ENCODE measurements at regions of chr1 and their contacts with region 1.

Region 1: DNA sequence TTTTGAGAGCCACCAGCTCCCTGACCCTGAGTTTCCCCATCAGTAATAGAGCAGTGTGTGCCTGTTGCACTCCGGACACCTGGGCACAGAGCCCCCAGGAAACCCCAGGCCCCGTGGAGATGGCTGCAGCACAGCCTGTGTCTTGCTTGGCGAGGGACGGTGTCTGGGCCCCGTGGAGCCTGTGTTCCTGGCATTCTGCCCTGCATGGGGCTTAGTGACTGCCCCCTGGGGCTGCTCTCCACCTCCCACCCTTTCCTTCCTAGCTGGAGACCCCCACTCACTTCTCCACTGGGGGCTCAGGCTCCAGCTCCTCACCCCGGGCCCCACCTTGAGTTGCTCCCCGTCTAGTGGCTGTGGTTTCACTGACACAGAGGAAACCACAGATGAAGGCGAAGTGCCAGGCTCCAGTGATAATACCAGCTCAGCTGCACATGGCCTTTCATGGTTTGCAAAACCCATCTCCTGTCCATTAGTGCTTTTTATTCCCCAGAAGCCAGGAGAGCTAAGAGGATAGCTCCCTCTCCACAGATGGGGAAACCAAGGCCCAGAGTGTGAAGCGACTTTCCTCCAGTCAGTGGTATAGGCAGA is 39.5 kb downstream of the DMRTB1 start:
- DNase-seq: no peak
- ATAC-seq: no peak
- H3K4me3 ChIP-seq: no peak overlapping the region
- H3K27ac ChIP-seq: no peak overlapping the region
- H3K4me1 ChIP-seq: no peaks in the 10 kb centered on the region
- H3K27me3 ChIP-seq: peaks cover 0 to 65% (median 33%) of the 10 kb centered on the region in 7 donors
- CTCF ChIP-seq: no peak

Region 2: GRCh38 chr1:53431805-53432565 is 66.7 kb before region 1 on chr1:
- intact Hi-C with region 1: no loop called
- DNase-seq: no peak
- ATAC-seq: no peak
- H3K4me3 ChIP-seq: no peak overlapping the region
- H3K27ac ChIP-seq: no peak overlapping the region
- H3K4me1 ChIP-seq: no peaks in the 10 kb centered on the region
- H3K27me3 ChIP-seq: peaks cover 0 to 43% (median 34%) of the 10 kb centered on the region in 7 donors
- CTCF ChIP-seq: no peak

Region 3: DNA sequence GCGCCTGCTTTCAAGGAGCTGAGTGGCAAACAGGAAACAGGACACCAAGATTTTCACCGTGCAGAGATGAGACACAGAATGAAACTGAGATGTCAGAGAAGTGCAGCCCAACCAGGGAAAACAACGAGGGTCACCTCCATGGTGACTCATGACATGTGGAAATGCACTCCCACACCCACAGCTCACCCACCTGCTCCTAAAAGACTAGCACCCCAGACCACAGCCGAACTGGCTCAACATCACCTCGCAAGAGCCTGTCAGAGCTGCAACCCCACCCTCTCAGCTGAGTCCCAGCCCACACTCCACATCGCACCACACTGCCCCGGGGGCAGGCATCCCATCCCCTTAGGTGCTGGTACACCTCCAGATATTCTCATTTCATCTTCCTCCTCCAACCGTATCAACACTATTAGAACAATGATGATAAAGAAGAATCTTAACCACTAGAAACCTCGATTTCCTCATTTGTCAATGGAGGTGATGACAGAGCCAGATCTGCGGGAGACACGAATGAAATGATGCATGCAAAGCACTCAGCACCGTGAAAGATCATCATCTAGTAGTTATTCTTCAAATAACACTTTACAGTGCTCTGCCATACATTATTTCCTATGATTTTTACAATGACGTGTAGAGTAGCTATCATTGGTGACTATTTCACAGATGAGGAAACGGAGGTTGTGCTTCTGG is 63.8 kb after region 1 on chr1:
- intact Hi-C with region 1: no loop called
- DNase-seq: no peak
- ATAC-seq: no peak
- H3K4me3 ChIP-seq: no peak overlapping the region
- H3K27ac ChIP-seq: no peak overlapping the region
- H3K4me1 ChIP-seq: no peaks in the 10 kb centered on the region
- H3K27me3 ChIP-seq: peaks cover 0 to 34% (median 15%) of the 10 kb centered on the region in 7 donors
- CTCF ChIP-seq: no peak

Region 4: DNA sequence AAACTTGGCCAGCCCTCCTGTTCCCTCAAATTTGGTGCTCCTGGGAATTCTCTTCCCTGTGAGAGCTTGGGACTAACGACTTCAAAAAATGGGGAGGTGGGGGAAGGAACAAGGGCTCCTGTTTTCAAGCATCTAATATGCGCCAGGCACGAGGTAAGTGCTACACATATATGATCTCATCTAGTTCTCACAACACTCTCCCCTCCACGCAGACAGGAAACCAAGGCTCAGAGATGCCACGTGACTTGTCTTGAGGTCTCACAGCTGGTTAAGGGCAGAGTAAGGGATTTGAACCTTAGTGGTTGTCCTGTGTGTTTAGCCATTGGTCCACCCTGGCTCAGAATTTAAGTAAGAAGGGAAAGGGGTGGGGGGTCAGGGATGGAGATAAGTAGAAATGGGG is 86.5 kb after region 1 on chr1:
- intact Hi-C with region 1: loop called in 1 of 10 experiments (anchors 10 kb)
- DNase-seq: no peak
- ATAC-seq: peak in 4 of 8 donors; percentile 32 to 51 (median 40)
- H3K4me3 ChIP-seq: no peak overlapping the region
- H3K27ac ChIP-seq: no peak overlapping the region
- H3K4me1 ChIP-seq: peaks cover 0 to 7% (median 0%) of the 10 kb centered on the region in 9 donors
- H3K27me3 ChIP-seq: peaks cover 0 to 10% (median 0%) of the 10 kb centered on the region in 7 donors
- CTCF ChIP-seq: no peak

Region 5: DNA sequence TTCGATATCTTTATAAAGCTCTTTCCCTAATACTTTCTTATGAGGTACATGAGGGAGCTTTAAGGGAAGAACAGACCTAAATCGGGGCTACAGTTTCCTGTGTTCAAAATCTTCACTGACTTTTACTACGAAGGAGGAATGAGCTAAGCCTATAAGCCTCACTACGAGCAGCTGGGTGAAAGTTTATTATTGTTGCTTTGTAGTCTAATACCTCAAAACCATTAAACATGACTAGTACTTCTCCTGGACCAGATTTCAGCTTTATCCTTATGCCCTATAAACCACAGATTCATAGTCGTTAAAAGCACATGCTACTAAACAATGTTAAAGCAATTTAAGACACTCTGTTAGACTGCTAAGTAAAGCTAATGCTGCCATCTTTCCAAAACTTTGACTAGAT is 309.3 kb after region 1 on chr1:
- intact Hi-C with region 1: no loop called
- DNase-seq: no peak
- ATAC-seq: no peak
- H3K4me3 ChIP-seq: no peak overlapping the region
- H3K27ac ChIP-seq: no peak overlapping the region
- H3K4me1 ChIP-seq: peaks cover 0 to 6% (median 0%) of the 10 kb centered on the region in 9 donors
- H3K27me3 ChIP-seq: no peaks in the 10 kb centered on the region
- CTCF ChIP-seq: no peak

Region 6: DNA sequence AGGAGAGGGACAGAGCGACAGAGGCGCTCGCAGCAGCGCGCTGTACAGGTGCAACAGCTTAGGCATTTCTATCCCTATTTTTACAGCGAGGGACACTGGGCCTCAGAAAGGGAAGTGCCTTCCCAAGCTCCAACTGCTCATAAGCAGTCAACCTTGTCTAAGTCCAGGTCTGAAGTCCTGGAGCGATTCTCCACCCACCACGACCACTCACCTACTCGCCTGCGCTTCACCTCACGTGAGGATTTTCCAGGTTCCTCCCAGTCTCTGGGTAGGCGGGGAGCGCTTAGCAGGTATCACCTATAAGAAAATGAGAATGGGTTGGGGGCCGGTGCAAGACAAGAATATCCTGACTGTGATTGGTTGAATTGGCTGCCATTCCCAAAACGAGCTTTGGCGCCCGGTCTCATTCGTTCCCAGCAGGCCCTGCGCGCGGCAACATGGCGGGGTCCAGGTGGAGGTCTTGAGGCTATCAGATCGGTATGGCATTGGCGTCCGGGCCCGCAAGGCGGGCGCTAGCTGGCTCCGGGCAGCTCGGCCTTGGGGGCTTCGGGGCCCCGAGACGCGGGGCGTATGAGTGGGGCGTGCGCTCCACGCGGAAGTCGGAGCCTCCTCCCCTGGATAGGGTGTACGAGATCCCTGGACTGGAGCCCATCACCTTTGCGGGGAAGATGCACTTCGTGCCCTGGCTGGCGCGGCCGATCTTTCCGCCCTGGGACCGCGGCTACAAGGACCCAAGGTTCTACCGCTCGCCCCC is 701.3 kb after region 1 on chr1 and contains the starts of genes CYB5RL and MRPL37:
- intact Hi-C with region 1: no loop called
- DNase-seq: peak; percentile 85 to 98
- ATAC-seq: peak; percentile 97 to 100 (median 99)
- H3K4me3 ChIP-seq: peak within 1 kb of the TSS; percentile 68 to 100 (median 84)
- H3K27ac ChIP-seq: peak within 1 kb of the TSS in 9 of 10 donors; percentile 60 to 90 (median 81)
- H3K4me1 ChIP-seq: peaks cover 6 to 32% (median 20%) of the 10 kb centered on the region in 9 donors
- H3K27me3 ChIP-seq: no peaks in the 10 kb centered on the region
- CTCF ChIP-seq: no peak
- total RNA-seq, gene CYB5RL: 3.2 to 8.3 (median 5.8) TPM
- total RNA-seq, gene MRPL37: 82.2 to 97.4 (median 90.2) TPM

Measured in heart right ventricle (tissue), 16 donors.